Activated CD4-positive, alpha-beta T cell treated with anti-CD3 and anti-CD28 coated beads, Interleukin-2, amount 10 ng/mL, durations not matched to agents 24 days and 14 days (primary cell): ENCODE measurements at regions of chr10 and their contacts with region 1.

Region 1: DNA sequence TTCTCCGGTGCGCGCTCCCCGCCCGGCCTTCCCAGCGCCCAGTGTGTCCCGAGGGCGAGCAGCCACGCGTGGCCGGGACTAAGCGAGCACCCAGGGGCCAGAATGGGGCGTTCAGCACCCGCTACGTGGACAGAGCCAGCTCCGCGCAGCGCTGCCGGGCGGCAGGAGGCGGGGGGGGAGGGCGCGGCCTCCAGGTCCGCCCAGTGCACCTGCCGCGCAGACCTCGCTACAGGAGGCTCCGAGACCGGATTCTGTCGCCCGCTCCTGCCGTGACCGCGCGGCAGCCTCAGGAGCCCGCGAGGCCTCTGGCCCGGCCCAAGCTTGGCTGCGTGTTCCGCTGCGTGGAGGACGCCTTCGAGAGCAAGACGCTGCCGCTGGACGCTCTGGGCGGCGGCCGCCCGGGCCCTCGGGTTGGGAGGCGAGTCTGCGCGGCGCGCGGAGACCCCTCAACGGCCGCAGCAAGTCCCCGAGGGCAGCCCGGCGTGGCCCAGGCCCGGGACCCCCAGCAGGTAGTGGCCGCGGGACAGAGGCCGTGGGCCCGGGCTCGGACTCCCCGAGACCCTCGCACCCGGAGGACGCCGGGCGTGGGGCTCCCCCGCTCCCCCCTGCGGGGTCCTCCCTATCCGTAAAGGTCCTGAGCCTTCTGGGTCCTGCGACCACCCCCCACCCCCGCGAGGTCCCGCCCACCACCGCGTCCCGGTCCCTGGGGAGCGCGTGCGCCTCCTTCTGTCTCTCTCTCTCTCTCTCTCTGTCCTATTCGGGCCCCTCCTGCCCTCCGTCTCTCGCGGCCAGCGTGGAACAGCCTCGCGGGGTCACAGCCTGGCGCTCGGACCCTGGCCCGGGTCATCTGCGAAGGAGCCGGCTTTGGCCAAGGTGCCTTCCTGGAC is 904 bp upstream of the DPYSL4 start:
- DNase-seq: peak; percentile 93
- H3K4me3 Mint-ChIP-seq: peak overlapping the region; percentile 80
- H3K27ac Mint-ChIP-seq: no peak overlapping the region
- H3K4me1 Mint-ChIP-seq: peaks cover 16% of the 10 kb centered on the region
- H3K27me3 Mint-ChIP-seq: peaks cover 37% of the 10 kb centered on the region

Region 2: GRCh38 chr10:132162021-132162531 is 23.8 kb before region 1 on chr10:
- intact Hi-C with region 1: loop called (anchors 1 kb)
- DNase-seq: peak; percentile 89
- H3K4me3 Mint-ChIP-seq: peak overlapping the region; percentile 83
- H3K27ac Mint-ChIP-seq: peak overlapping the region; percentile 99
- H3K4me1 Mint-ChIP-seq: peaks cover 41% of the 10 kb centered on the region
- H3K27me3 Mint-ChIP-seq: no peaks in the 10 kb centered on the region

Region 3: GRCh38 chr10:132331526-132332432 is 145.9 kb after region 1 on chr10 and contains the start of gene LRRC27:
- intact Hi-C with region 1: loop called (anchors 5 kb)
- DNase-seq: peak; percentile 100
- H3K4me3 Mint-ChIP-seq: peak within 1 kb of the TSS; percentile 88
- H3K27ac Mint-ChIP-seq: peak within 1 kb of the TSS; percentile 96
- H3K4me1 Mint-ChIP-seq: peaks cover 50% of the 10 kb centered on the region
- H3K27me3 Mint-ChIP-seq: peaks cover 4% of the 10 kb centered on the region
- total RNA-seq, gene LRRC27: 2.3 and 3.3 TPM in 2 replicates

Region 4: GRCh38 chr10:133373104-133373624 is 1187.3 kb after region 1 on chr10 and contains the start of gene ECHS1:
- intact Hi-C with region 1: loop called (anchors 10 kb)
- DNase-seq: peak; percentile 99
- H3K4me3 Mint-ChIP-seq: peak within 1 kb of the TSS; percentile 94
- H3K27ac Mint-ChIP-seq: peak within 1 kb of the TSS; percentile 86
- H3K4me1 Mint-ChIP-seq: peaks cover 11% of the 10 kb centered on the region
- H3K27me3 Mint-ChIP-seq: peaks cover 3% of the 10 kb centered on the region
- total RNA-seq, gene ECHS1: 64.3 and 66.3 TPM in 2 replicates